ENCODE measurements at regions of chr12 and their contacts with region 1.

Region 1: GRCh38 chr12:57111031-57111734 is at the start of gene STAT6:
- DNase-seq: peak; percentile 86
- H3K4me3 Mint-ChIP-seq: peak within 1 kb of the TSS; percentile 80
- H3K27ac Mint-ChIP-seq: peak within 1 kb of the TSS; percentile 89
- H3K4me1 Mint-ChIP-seq: peaks cover 35% of the 10 kb centered on the region
- H3K27me3 Mint-ChIP-seq: no peaks in the 10 kb centered on the region
- CTCF ChIP-seq: no peak
- total RNA-seq, gene STAT6: 99.7 and 122 TPM in 2 replicates

Region 2: DNA sequence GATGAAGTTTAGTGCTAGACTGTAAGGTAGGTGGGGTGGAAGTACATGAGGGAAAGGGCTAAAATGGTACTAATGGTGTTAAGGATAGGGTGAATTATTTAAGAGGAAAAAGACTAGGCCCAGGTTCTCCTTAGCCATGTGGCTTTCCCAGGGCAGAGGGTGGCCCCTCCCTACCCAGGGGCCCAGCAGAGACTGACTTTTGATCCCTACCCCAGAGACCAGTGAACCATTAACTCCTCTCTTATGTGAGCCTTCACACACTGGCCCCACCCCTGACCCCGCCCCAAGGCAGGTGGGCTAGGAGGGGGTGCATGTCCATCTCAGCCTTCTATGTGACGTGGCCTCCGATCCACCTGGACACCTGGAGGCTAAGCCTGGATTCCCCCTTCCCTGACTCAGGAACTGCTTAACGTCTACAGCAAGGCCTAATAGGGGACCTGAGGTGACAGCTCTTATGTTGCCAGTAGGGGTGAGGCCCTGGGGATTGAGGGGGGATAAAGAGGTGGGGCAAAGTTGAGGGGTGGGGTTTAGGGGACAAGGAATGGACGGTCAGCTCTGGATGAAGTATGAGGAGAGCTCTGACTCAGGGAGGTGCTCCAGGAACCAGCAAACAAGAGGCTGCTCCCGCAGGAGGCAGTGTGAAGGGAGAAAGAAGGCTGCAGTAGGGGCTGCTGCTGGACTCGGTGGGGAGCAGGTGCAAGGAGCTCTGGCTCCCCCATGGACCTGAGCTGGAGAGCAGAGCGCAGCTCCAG is 880.6 kb before region 1 on chr12:
- CTCF ChIA-PET with region 1: no interaction called
- POLR2A ChIA-PET with region 1: no interaction called
- intact Hi-C with region 1: no loop called
- DNase-seq: no peak
- H3K4me3 Mint-ChIP-seq: no peak overlapping the region
- H3K27ac Mint-ChIP-seq: no peak overlapping the region
- H3K4me1 Mint-ChIP-seq: peaks cover 6% of the 10 kb centered on the region
- H3K27me3 Mint-ChIP-seq: no peaks in the 10 kb centered on the region
- CTCF ChIP-seq: no peak

Region 3: DNA sequence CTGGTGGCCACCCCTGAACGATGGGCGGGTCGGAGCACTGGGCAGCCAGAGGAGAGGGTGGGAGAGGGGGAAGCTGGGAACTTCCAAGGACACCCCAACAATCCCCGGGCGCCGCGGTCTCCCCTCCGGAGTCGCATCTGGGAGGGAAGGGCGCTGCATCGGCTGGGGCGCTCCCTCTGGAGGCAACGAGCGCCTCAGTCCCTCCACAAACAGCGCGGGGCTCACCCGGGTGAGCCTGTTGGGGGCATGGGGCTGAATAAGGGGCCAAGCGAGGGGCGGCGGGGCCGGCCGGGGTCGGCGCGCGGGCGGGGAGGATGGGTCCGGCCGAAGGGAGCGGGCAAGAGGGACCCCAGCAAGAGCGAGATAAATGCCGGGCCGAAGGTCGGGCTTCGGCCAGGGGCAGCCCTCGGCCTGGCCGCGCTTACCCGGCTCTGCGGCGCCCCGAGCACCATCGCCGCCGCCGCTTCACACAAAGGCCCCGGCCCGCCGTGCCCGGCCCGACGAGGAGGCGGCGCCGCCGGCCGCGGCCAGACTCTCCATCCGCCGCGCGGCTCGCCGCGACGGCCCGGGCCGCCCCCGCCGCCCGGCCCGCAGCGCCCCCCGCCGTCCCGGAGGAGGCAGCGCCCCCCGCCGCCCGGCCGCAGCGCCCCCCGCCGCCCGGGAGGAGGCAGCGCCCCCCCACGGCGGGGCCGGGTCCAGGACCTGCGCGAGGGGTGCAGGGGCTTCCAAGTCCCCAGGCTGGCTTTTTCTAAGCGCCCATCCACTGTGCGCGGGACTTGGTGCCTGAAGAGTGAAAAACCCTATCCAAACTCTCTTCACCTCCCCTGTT is 105.0 kb before region 1 on chr12 and contains the start of gene ZBTB39:
- CTCF ChIA-PET with region 1: interaction called, 7 read pairs
- POLR2A ChIA-PET with region 1: interaction called, 18 read pairs
- intact Hi-C with region 1: loop called (anchors 1 kb)
- DNase-seq: peak; percentile 52
- H3K4me3 Mint-ChIP-seq: peak within 1 kb of the TSS; percentile 84
- H3K27ac Mint-ChIP-seq: peak within 1 kb of the TSS; percentile 60
- H3K4me1 Mint-ChIP-seq: peaks cover 27% of the 10 kb centered on the region
- H3K27me3 Mint-ChIP-seq: no peaks in the 10 kb centered on the region
- CTCF ChIP-seq: peak; percentile 43
- total RNA-seq, gene ZBTB39: 5.2 and 6.2 TPM in 2 replicates

Region 4: DNA sequence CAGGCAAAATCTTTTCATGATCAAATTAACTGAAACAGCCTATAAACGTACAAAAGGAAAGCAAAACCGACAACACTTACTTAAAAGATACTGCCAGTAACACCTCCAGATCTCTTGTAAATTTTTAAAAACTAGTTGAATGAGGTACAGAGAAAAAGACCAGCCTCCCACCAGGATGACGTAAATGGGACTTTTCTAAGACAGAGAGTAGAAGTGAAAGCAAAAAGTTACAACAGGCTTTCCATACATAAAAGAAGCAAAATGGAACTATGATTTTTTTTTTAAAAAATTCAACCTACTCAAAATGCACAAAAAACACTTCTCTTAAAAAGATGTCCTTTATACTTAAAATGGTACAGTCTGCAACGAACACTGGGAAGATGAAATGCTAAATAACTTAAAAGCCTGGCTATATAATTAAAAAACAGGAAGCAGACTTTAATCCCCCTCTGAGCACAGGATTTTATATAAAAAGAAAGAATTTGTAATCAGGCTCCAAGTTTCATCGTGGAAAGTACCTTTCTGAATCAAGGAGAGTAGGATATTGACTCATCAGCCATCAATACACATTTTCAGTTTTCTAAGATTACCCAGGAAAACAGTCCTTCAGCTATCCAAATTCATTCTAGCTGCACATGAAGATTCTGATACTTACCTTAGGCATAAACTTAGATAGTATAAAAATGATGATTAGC is 47.0 kb before region 1 on chr12:
- CTCF ChIA-PET with region 1: interaction called, 112 read pairs
- POLR2A ChIA-PET with region 1: interaction called, 146 read pairs
- intact Hi-C with region 1: loop called (anchors 1 kb)
- DNase-seq: no peak
- H3K4me3 Mint-ChIP-seq: no peak overlapping the region
- H3K27ac Mint-ChIP-seq: no peak overlapping the region
- H3K4me1 Mint-ChIP-seq: no peaks in the 10 kb centered on the region
- H3K27me3 Mint-ChIP-seq: no peaks in the 10 kb centered on the region
- CTCF ChIP-seq: no peak

Region 5: DNA sequence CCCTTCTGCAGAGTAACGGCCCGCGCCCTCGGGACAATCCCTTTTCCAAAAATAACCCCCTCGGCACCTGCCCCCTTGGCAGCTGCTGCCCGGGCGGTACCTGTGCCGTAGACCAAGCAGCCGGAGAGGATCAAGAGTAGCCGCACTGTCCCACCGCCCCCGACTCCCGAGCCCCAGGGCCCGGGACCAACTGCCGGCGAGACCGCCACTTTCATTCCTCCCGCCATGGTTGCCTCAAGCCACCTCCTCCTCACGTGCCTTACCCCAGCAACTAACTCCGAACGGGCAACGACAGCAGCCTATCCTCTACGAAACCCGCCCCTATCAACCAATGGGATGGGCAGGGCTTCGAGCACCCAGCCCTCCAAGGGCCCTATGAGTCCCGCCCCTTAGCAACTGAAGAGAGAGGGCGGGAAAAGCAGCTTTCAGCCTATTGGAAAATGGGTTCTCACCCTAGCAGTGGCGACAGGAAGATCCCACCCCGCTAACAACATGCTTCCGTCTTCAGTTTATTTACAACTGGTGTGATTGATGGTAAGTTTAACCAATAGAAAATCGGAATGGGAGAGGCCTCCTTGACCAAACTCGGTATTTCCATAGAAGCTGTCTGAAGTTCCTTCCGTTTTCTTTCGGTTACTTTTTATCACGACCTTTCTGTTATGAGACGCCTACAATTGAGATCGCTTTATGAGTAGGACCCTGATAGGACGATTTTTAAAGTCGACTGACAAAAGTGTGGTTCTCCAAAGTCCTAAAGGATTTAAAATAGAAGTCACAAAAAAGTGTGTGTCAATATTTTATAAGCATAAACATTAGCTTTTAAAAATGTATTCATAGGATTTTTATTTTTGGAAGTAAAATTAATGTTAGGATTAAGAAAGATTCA is 32.4 kb before region 1 on chr12 and contains the start of gene NEMP1:
- CTCF ChIA-PET with region 1: interaction called, 66 read pairs
- POLR2A ChIA-PET with region 1: interaction called, 162 read pairs
- intact Hi-C with region 1: no loop called
- DNase-seq: peak; percentile 100
- H3K4me3 Mint-ChIP-seq: peak within 1 kb of the TSS; percentile 100
- H3K27ac Mint-ChIP-seq: peak within 1 kb of the TSS; percentile 97
- H3K4me1 Mint-ChIP-seq: no peaks in the 10 kb centered on the region
- H3K27me3 Mint-ChIP-seq: no peaks in the 10 kb centered on the region
- CTCF ChIP-seq: no peak
- total RNA-seq, gene NEMP1: 17.5 and 22.5 TPM in 2 replicates

Region 6: DNA sequence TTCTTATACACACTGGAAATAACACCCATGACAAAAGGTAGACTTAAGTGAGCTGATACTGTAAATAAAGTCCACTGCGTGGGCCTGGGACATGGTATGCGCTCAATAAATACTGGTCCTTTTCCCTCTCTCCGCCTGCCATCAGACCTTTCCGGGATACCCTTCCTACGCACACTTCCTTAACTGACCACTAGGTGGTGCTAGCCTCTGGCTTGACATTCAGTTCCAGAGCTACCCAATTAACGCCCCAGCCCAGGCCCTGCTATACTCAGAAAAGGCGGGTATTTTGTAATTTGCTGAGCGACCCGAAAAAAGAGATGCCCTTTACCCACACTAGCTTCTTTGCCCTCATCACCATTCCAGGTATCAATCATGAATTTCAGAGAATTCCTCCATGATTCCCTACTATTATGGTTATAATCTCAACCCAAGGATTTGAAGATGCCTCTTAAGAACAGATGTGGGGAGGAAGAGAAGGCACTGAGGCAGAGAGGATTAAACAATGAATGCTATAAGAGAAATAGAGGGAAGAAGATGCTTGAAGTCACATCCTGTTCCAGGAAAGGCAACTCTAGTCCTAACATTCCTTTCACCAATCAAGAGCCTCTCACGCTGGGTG is 13.2 kb after region 1 on chr12:
- CTCF ChIA-PET with region 1: interaction called, 61 read pairs
- POLR2A ChIA-PET with region 1: interaction called, 56 read pairs
- intact Hi-C with region 1: no loop called
- DNase-seq: peak; percentile 85
- H3K4me3 Mint-ChIP-seq: no peak overlapping the region
- H3K27ac Mint-ChIP-seq: no peak overlapping the region
- H3K4me1 Mint-ChIP-seq: peaks cover 11% of the 10 kb centered on the region
- H3K27me3 Mint-ChIP-seq: no peaks in the 10 kb centered on the region
- CTCF ChIP-seq: peak; percentile 90

Region 7: DNA sequence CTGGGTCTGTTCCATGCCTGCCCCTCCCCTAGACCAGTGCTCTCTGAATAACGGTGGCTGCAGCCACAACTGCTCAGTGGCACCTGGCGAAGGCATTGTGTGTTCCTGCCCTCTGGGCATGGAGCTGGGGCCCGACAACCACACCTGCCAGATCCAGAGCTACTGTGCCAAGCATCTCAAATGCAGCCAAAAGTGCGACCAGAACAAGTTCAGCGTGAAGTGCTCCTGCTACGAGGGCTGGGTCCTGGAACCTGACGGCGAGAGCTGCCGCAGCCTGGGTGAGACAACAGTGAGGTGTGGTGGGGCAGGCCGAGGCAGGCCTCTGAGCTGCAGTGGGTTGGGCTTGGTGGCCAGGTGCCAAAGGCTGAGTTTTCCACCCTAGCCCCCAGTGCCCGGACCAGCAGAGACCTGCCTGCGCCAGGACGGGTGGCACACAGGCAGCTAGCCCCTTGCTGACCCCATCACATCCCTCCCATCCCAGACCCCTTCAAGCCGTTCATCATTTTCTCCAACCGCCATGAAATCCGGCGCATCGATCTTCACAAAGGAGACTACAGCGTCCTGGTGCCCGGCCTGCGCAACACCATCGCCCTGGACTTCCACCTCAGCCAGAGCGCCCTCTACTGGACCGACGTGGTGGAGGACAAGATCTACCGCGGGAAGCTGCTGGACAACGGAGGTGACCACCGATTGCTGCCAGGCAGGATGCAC is 64.4 kb after region 1 on chr12:
- CTCF ChIA-PET with region 1: interaction called, 530 read pairs
- POLR2A ChIA-PET with region 1: interaction called, 56 read pairs
- intact Hi-C with region 1: no loop called
- DNase-seq: peak; percentile 94
- H3K4me3 Mint-ChIP-seq: peak overlapping the region; percentile 32
- H3K27ac Mint-ChIP-seq: peak overlapping the region; percentile 68
- H3K4me1 Mint-ChIP-seq: peaks cover 41% of the 10 kb centered on the region
- H3K27me3 Mint-ChIP-seq: no peaks in the 10 kb centered on the region
- CTCF ChIP-seq: peak; percentile 91

Region 8: DNA sequence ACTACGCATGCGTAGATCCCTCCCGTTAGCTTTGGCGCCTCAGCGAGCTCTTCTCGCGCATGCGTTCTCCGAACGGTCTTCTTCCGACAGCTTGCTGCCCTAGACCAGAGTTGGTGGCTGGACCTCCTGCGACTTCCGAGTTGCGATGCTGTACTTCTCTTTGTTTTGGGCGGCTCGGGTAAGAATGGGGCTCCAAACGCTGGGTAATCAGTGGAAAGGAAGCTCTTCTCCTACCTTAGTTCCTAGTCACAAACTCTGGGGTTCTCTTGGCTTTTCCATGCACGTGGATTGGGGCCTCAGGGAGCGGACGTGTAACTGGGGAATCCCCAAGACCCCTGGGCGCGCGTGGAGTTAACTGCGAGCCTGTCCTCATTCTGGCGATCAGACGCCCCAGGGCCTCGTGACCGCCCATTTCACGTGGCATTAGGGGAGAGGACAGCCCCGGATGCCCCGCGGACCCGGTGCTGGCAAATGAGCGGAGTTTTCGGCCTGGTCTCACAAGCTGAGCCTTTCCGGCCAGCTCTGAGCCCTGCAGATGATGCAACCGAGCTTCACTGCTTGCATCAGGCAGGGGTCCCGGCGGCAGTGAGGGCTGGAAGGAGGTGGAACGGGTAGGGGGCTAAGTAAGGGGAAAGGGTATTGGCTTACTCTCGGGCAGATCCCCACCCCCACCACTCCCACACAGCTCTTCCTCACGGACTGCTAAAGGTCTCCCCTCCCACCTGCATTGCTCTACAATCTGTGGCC is 118.6 kb after region 1 on chr12 and contains the start of gene SHMT2:
- CTCF ChIA-PET with region 1: no interaction called
- POLR2A ChIA-PET with region 1: interaction called, 23 read pairs
- intact Hi-C with region 1: no loop called
- DNase-seq: peak; percentile 95
- H3K4me3 Mint-ChIP-seq: peak within 1 kb of the TSS; percentile 98
- H3K27ac Mint-ChIP-seq: peak within 1 kb of the TSS; percentile 99
- H3K4me1 Mint-ChIP-seq: peaks cover 20% of the 10 kb centered on the region
- H3K27me3 Mint-ChIP-seq: no peaks in the 10 kb centered on the region
- CTCF ChIP-seq: no peak
- total RNA-seq, gene SHMT2: 375 and 421 TPM in 2 replicates

Measured in MCF 10A (cell line).